Transverse colon (tissue), 4 donors: ENCODE measurements at regions of chr1 and their contacts with region 1.

Region 1: DNA sequence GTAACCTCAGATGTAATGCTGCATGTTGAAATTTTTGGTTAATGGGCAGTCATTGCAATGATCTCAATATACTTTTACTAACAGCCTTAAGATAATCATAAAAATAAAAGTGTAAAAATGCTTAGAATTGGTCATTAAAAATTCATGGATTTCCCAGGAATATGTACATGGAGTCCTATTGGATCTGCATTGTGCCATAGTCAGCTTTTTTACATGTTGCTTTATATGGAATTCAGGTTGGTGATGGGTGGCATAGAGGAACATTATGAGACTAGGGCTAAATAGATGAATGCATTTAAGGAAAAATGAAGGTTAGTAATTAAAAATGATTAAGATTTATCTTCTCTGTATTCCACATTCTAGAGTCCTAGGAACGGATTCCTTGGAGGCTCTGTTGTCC is 103.2 kb downstream of the SLC35F3 start:
- DNase-seq: no peak
- H3K4me3 ChIP-seq: no peak overlapping the region
- H3K27ac ChIP-seq: no peak overlapping the region
- H3K4me1 ChIP-seq: no peaks in the 10 kb centered on the region
- H3K27me3 ChIP-seq: no peaks in the 10 kb centered on the region
- CTCF ChIP-seq: no peak
- EP300 ChIP-seq: no peak
- POLR2A ChIP-seq: no peak

Region 2: DNA sequence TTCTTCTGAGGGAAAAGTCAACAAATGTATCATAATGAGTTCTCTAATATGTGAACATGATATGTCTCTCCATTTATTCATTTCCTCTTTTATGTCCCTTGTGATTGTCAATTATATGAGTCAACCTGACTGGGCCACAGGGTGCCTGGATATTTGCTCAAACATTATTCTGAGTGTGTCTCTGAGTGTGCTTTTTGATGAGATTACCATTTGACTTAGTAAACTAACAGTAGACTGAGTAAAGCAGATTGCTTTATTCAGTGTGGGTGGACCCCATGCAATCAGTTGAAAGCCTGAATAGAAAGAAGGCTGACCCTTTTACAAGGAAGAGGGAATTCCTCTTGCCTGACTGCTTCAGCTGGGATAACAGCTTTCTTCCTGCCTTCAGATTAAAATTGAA is 39.4 kb after region 1 on chr1:
- in situ Hi-C with region 1: no loop called
- intact Hi-C with region 1: loop called (anchors 2 kb)
- DNase-seq: no peak
- H3K4me3 ChIP-seq: no peak overlapping the region
- H3K27ac ChIP-seq: no peak overlapping the region
- H3K4me1 ChIP-seq: no peaks in the 10 kb centered on the region
- H3K27me3 ChIP-seq: no peaks in the 10 kb centered on the region
- CTCF ChIP-seq: no peak
- EP300 ChIP-seq: no peak
- POLR2A ChIP-seq: no peak